ENCODE measurements at regions of chr7 and their contacts with region 1.

Region 1: GRCh38 chr7:50092579-50093491 is at the start of gene ZPBP:
- DNase-seq: peak in 7 of 9 experiments; percentile 42 to 79 (median 54)
- ATAC-seq: peak; percentile 78
- H3K4me3 ChIP-seq: peak within 1 kb of the TSS; percentile 40 to 63
- H3K4me3 Mint-ChIP-seq: peak within 1 kb of the TSS; percentile 92
- H3K27ac ChIP-seq: peak within 1 kb of the TSS; percentile 25 to 51
- H3K27ac Mint-ChIP-seq: peak within 1 kb of the TSS; percentile 86
- H3K4me1 ChIP-seq: peaks cover 4% of the 10 kb centered on the region
- H3K4me1 Mint-ChIP-seq: peaks cover 16% of the 10 kb centered on the region
- H3K27me3 ChIP-seq: no peaks in the 10 kb centered on the region
- H3K27me3 Mint-ChIP-seq: no peaks in the 10 kb centered on the region
- CTCF ChIP-seq: peak; percentile 98
- total RNA-seq, gene ZPBP: not detected

Region 2: DNA sequence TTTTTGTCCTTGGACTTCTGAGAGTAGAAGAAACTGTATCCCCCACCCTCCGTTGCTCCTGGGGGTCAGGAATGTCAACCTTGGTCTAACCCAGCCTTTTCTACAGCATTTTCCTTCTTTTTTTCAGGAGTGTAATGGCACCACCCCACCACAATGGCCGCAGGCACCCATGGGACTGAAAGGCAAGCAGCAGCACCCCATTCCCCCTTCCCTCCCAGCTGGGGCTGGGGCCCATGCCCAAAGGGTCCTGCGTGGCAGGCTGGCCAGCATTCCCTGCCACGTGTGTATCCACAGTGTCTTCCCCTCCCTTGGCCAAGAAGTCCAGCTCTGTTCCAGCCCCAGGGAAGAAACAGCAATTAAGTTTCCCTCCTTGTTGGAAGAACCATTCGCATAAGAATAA is 106.6 kb before region 1 on chr7:
- CTCF ChIA-PET with region 1: no interaction called
- POLR2A ChIA-PET with region 1: no interaction called
- intact Hi-C with region 1: no loop called
- DNase-seq: no peak
- ATAC-seq: no peak
- H3K4me3 ChIP-seq: no peak overlapping the region
- H3K4me3 Mint-ChIP-seq: no peak overlapping the region
- H3K27ac ChIP-seq: no peak overlapping the region
- H3K27ac Mint-ChIP-seq: no peak overlapping the region
- H3K4me1 ChIP-seq: no peaks in the 10 kb centered on the region
- H3K4me1 Mint-ChIP-seq: no peaks in the 10 kb centered on the region
- H3K27me3 ChIP-seq: no peaks in the 10 kb centered on the region
- H3K27me3 Mint-ChIP-seq: peaks cover 5% of the 10 kb centered on the region
- CTCF ChIP-seq: no peak

Region 3: DNA sequence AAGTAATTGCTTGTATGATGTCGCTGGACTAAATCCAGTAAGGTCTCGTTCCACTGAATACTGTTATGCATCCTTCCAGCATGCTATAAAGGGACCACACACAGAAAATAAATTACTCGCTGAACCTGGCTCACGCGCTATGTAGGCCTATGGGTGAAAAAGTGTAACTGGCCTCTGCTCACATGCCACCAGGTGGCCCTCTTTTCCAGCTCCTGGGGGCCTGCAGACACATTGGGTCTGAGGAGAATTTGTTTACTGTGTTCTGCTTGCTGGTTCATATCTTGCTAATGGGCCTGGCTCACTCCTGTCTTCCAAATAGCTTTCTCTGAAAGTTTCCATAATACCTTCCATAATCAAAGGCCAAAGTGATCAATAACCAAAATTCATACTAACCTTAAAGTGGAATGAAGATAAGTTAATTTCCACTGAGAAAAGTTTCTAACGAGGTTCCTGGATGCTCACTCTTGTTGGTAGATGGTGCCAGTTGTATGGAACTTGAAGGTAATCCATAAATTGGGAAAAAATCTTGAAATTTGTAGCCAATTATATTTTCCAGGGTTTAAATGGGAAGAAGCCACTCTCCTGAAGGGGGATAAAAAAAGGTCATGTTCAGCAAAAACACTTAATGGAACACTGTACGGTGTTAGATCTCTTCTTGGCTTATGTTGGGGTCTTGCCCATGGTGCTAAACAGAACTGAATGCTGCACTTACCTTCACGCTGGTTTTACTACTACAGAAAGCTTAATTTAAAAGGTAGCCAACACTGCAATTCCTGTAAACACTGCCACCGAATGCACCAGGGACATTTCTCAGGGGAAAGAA is 27.2 kb after region 1 on chr7:
- CTCF ChIA-PET with region 1: interaction called, 10 read pairs
- POLR2A ChIA-PET with region 1: no interaction called
- intact Hi-C with region 1: no loop called
- DNase-seq: peak in 7 of 9 experiments; percentile 7 to 47 (median 28)
- ATAC-seq: peak; percentile 46
- H3K4me3 ChIP-seq: no peak overlapping the region
- H3K4me3 Mint-ChIP-seq: no peak overlapping the region
- H3K27ac ChIP-seq: no peak overlapping the region
- H3K27ac Mint-ChIP-seq: no peak overlapping the region
- H3K4me1 ChIP-seq: no peaks in the 10 kb centered on the region
- H3K4me1 Mint-ChIP-seq: no peaks in the 10 kb centered on the region
- H3K27me3 ChIP-seq: no peaks in the 10 kb centered on the region
- H3K27me3 Mint-ChIP-seq: no peaks in the 10 kb centered on the region
- CTCF ChIP-seq: peak; percentile 21

Region 4: GRCh38 chr7:50147951-50148808 is 55.3 kb after region 1 on chr7:
- CTCF ChIA-PET with region 1: no interaction called
- POLR2A ChIA-PET with region 1: no interaction called
- intact Hi-C with region 1: no loop called
- DNase-seq: peak in 4 of 9 experiments; percentile 18 to 85 (median 60)
- ATAC-seq: peak; percentile 89
- H3K4me3 ChIP-seq: no peak overlapping the region
- H3K4me3 Mint-ChIP-seq: peak overlapping the region; percentile 42
- H3K27ac ChIP-seq: no peak overlapping the region
- H3K27ac Mint-ChIP-seq: peak overlapping the region; percentile 80
- H3K4me1 ChIP-seq: peaks cover 21% of the 10 kb centered on the region
- H3K4me1 Mint-ChIP-seq: peaks cover 36% of the 10 kb centered on the region
- H3K27me3 ChIP-seq: no peaks in the 10 kb centered on the region
- H3K27me3 Mint-ChIP-seq: no peaks in the 10 kb centered on the region
- CTCF ChIP-seq: no peak

Region 5: DNA sequence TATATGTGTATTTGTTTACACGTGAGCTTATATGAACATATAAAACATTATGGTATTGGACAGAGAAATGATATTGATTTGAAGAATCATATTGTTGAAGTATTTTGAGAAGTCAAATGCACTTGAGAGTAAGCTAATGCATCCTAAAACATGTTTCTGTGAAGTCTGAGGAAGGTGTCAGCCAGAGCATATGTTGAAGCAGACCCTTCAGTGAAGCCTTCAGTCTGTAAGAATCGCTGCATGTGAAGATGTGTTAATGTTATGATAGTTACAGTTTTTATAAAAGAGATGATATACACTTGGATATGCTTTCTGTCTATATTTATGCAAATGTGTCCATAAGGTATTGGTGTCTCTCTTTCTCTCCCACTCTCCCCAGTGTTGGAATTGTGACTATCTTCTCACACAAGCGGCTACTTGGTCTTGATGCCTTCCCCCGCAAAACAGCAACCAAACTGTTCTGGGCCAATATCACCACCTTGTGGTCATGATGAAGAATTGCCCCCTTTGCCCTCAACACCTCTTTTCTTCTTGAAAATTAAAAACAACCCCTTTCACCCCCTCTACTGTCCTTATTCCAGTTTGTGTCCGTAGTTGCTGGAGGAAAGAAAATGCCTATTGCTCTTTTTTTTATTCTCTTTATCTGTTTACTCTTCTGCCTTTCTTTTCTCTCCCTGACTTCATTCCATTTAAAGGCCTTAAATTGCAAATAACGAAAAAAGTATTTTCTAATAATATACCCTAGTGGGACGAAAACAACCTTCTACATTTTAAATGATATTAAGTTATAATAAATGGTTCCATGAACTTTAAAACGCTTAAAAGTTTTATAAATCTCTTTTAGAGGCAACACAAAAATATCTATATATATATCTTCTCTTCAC is 276.6 kb after region 1 on chr7:
- CTCF ChIA-PET with region 1: interaction called, 10 read pairs
- POLR2A ChIA-PET with region 1: no interaction called
- intact Hi-C with region 1: loop called (anchors 1 to 2 kb)
- DNase-seq: peak in 4 of 9 experiments; percentile 55 to 92 (median 73)
- ATAC-seq: peak; percentile 58
- H3K4me3 ChIP-seq: no peak overlapping the region
- H3K4me3 Mint-ChIP-seq: peak overlapping the region; percentile 44
- H3K27ac ChIP-seq: peak overlapping the region in 1 of 2 experiments; percentile 67
- H3K27ac Mint-ChIP-seq: peak overlapping the region; percentile 99
- H3K4me1 ChIP-seq: peaks cover 95% of the 10 kb centered on the region
- H3K4me1 Mint-ChIP-seq: peaks cover 95% of the 10 kb centered on the region
- H3K27me3 ChIP-seq: no peaks in the 10 kb centered on the region
- H3K27me3 Mint-ChIP-seq: no peaks in the 10 kb centered on the region
- CTCF ChIP-seq: peak; percentile 92

Region 6: DNA sequence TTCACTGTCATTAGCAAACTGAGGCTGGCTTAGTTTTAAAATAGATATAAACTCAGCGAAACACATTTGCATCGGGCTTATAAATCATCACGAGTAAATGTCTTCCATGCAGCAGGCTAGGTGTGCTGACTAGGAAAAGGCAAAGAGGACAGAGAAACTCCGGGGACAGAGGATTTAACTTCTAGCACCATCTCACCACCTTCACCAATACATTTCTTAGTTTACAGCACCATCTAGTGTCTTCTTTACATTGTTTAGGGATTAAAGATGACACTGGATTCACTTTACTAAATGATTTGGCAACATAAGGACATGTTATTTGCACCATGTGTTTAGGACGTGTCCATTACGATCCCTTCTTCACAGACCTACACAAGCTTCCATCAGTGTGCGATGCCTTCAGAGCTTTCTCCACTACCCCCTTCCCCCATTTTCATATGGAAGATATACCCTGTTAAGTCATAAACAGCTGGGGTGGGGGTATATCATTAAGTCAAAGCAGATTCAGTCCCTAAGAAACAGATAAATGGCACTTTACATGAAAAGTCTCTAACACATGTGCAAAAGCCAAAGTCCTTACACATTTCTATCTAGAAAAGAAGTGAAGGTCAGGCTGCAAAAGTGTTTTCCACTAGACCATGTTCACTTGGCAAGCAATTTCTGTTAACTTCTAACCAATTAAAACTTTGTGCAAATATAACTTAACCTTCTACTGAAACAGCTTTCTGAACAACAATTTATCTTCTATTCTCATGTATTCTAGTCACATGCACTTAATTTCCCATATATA is 586.6 kb after region 1 on chr7:
- CTCF ChIA-PET with region 1: interaction called, 33 read pairs
- POLR2A ChIA-PET with region 1: no interaction called
- intact Hi-C with region 1: loop called (anchors 1 kb)
- DNase-seq: peak in 2 of 9 experiments; percentile 63 to 75
- ATAC-seq: peak; percentile 67
- H3K4me3 ChIP-seq: no peak overlapping the region
- H3K4me3 Mint-ChIP-seq: no peak overlapping the region
- H3K27ac ChIP-seq: no peak overlapping the region
- H3K27ac Mint-ChIP-seq: no peak overlapping the region
- H3K4me1 ChIP-seq: no peaks in the 10 kb centered on the region
- H3K4me1 Mint-ChIP-seq: peaks cover 2% of the 10 kb centered on the region
- H3K27me3 ChIP-seq: no peaks in the 10 kb centered on the region
- H3K27me3 Mint-ChIP-seq: peaks cover 5% of the 10 kb centered on the region
- CTCF ChIP-seq: peak; percentile 68

Region 7: GRCh38 chr7:51162724-51163329 is 1070.0 kb after region 1 on chr7:
- CTCF ChIA-PET with region 1: interaction called, 46 read pairs
- POLR2A ChIA-PET with region 1: no interaction called
- intact Hi-C with region 1: loop called (anchors 1 kb)
- DNase-seq: peak; percentile 16 to 70 (median 54)
- ATAC-seq: peak; percentile 54
- H3K4me3 ChIP-seq: no peak overlapping the region
- H3K4me3 Mint-ChIP-seq: no peak overlapping the region
- H3K27ac ChIP-seq: no peak overlapping the region
- H3K27ac Mint-ChIP-seq: no peak overlapping the region
- H3K4me1 ChIP-seq: no peaks in the 10 kb centered on the region
- H3K4me1 Mint-ChIP-seq: peaks cover 6% of the 10 kb centered on the region
- H3K27me3 ChIP-seq: no peaks in the 10 kb centered on the region
- H3K27me3 Mint-ChIP-seq: peaks cover 19% of the 10 kb centered on the region
- CTCF ChIP-seq: peak; percentile 71